ENCODE measurements at regions of chr6 and their contacts with region 1.

Region 1: DNA sequence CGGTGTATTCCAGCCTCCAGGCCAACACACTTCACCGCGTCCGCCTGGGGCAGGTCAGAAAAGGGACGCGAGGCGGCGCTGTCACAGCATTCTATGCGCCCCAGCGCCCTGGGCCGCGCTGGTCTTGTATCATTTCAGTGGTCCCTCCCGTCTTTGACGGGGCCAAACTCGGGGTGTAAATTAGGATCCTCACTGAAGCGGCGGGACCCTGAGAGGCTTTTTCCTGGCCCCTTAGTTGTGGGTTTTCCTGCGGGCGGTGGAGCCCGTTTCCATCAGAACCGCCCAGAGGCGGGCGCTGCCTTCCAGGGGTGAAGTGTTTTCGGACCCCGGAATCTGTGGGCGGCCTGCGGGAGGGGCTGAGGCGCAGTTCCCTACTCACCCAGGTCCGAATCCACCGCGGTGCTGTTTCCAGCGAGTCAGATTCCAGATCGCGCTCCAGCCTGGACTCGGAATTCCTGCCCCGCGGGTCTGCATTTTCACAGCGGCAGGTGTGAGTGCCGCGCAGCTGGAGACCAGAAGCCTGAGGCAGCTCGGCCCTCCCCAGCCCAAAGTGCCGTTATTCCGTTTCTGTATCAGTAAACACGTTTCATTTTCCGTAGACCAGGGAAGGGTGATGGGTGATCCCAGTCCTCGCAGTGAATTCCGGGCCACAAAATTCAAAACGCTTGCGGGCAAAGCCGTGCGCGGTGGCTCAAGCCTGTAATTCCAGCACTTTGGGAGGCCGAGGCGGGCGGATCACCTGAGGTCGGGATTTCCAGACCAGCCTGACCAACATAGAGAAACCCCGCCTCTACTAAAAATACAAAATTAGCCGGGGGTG is 3.9 kb upstream of the MICB start:
- DNase-seq: peak; percentile 70
- ATAC-seq: peak; percentile 73
- H3K4me3 ChIP-seq: peak overlapping the region; percentile 59
- H3K27ac ChIP-seq: peak overlapping the region; percentile 81; the same call in 1 of the 2 replicates
- H3K4me1 ChIP-seq: peaks cover 3% of the 10 kb centered on the region
- H3K27me3 ChIP-seq: no peaks in the 10 kb centered on the region
- CTCF ChIP-seq: peak; percentile 92
- POLR2A ChIP-seq: no peak
- RAD21 ChIP-seq: peak; percentile 84

Region 2: GRCh38 chr6:31453259-31453658 is 40.8 kb before region 1 on chr6:
- CTCF ChIA-PET with region 1: no interaction called
- POLR2A ChIA-PET with region 1: no interaction called
- dilution Hi-C with region 1: no loop called
- in situ Hi-C with region 1: no loop called
- intact Hi-C with region 1: no loop called
- DNase-seq: no peak
- ATAC-seq: no peak
- H3K4me3 ChIP-seq: no peak overlapping the region
- H3K27ac ChIP-seq: no peak overlapping the region
- H3K4me1 ChIP-seq: no peaks in the 10 kb centered on the region
- H3K27me3 ChIP-seq: peaks cover 14% of the 10 kb centered on the region
- CTCF ChIP-seq: no peak
- POLR2A ChIP-seq: no peak
- RAD21 ChIP-seq: no peak

Region 3: DNA sequence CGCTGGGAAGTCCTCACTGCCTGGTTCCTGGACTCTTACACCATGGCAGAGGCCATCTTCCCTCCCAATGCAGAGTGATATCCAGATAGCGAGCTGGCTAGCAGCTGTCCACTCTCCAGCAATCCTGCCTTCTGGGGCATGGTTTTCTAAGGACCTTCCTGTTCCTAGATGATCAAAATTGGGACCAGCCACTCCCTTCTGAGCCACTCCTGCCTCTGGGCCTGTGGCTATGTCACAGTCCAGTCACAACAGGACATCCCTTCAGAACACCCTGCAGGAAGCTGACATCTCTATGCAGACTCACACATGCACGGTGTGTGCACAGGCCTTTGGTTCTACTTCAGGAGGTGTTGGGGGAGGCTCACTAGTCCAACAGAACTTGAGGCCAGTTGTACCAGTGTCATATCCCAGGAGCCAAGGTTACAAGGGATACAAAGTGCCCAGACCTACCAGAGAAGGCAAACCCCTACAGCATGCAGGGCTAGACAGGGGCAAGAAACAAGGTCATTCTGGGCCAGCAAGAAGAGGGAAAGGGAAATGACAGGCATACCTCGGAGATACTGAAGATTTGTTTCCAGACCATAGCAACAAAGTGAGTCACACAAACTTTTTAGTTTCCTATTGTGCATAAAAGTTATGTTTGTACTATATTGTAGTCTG is 32.0 kb after region 1 on chr6:
- CTCF ChIA-PET with region 1: interaction called, 7 read pairs
- POLR2A ChIA-PET with region 1: no interaction called
- dilution Hi-C with region 1: no loop called
- in situ Hi-C with region 1: no loop called
- intact Hi-C with region 1: loop called (anchors 5 kb)
- DNase-seq: peak; percentile 57
- ATAC-seq: peak; percentile 63
- H3K4me3 ChIP-seq: no peak overlapping the region
- H3K27ac ChIP-seq: peak overlapping the region; percentile 8
- H3K4me1 ChIP-seq: peaks cover 10% of the 10 kb centered on the region
- H3K27me3 ChIP-seq: no peaks in the 10 kb centered on the region
- CTCF ChIP-seq: no peak
- POLR2A ChIP-seq: no peak
- RAD21 ChIP-seq: no peak

Region 4: GRCh38 chr6:31541658-31542521 is 47.8 kb after region 1 on chr6 and contains the start of gene DDX39B:
- CTCF ChIA-PET with region 1: interaction called, 4 read pairs
- POLR2A ChIA-PET with region 1: interaction called, 8 read pairs
- dilution Hi-C with region 1: no loop called
- in situ Hi-C with region 1: loop called (anchors 5 kb)
- intact Hi-C with region 1: loop called (anchors 1 kb)
- DNase-seq: peak; percentile 98
- ATAC-seq: peak; percentile 83
- H3K4me3 ChIP-seq: peak within 1 kb of the TSS; percentile 72
- H3K27ac ChIP-seq: peak within 1 kb of the TSS; percentile 83
- H3K4me1 ChIP-seq: peaks cover 10% of the 10 kb centered on the region
- H3K27me3 ChIP-seq: no peaks in the 10 kb centered on the region
- CTCF ChIP-seq: no peak
- POLR2A ChIP-seq: peak; percentile 98
- RAD21 ChIP-seq: 0 out of 2 replicates have a peak, but pooled peaks have one; percentile 13
- total RNA-seq, gene DDX39B: 640 and 796 TPM in 2 replicates

Region 5: GRCh38 chr6:31597006-31597405 is 102.9 kb after region 1 on chr6:
- CTCF ChIA-PET with region 1: interaction called, 20 read pairs
- POLR2A ChIA-PET with region 1: no interaction called
- dilution Hi-C with region 1: no loop called
- in situ Hi-C with region 1: loop called (anchors 5 kb)
- intact Hi-C with region 1: loop called (anchors 1 kb)
- DNase-seq: peak; percentile 31
- ATAC-seq: peak; percentile 56; the same call in 1 of the 2 replicates
- H3K4me3 ChIP-seq: no peak overlapping the region
- H3K27ac ChIP-seq: no peak overlapping the region
- H3K4me1 ChIP-seq: no peaks in the 10 kb centered on the region
- H3K27me3 ChIP-seq: no peaks in the 10 kb centered on the region; the same call in 1 of the 2 replicates
- CTCF ChIP-seq: peak; percentile 37
- POLR2A ChIP-seq: no peak
- RAD21 ChIP-seq: peak; percentile 42

Region 6: DNA sequence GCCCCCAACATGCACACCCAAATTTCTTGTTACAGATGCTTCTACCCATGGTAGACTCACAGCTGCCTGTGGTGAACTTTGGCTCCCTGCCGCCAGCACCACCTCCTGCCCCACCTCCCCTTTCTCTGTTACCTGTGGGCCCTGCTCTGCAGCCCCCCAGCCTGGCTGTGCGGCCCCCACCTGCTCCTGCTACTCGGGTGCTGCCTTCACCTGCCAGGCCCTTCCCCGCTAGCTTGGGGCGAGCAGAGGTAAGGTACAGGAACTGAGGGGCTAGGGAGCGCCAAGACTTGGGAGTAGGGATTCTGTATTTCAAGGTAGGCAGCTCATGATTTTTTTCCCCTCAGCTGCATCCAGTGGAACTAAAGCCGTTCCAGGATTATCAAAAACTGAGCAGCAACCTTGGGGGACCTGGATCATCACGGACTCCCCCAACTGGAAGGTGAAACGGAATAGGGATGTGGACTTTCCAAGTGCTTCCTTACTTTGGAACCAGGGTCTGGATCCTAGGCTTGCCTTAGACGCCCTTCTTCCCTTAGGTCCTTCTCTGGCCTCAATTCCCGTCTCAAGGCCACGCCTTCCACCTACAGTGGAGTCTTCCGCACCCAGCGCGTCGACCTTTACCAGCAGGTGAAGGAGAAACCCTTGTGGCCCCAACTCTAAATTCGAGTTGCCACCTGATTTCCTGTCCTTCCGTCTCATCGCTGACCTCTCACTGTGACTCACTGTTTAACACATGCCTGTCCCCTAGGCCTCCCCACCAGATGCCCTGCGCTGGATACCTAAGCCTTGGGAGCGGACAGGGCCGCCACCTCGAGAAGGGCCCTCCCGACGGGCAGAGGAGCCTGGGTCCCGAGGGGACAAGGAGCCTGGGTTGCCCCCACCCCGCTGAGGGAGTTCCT is 142.9 kb after region 1 on chr6:
- CTCF ChIA-PET with region 1: no interaction called
- POLR2A ChIA-PET with region 1: no interaction called
- dilution Hi-C with region 1: no loop called
- in situ Hi-C with region 1: no loop called
- intact Hi-C with region 1: no loop called
- DNase-seq: no peak
- ATAC-seq: no peak
- H3K4me3 ChIP-seq: no peak overlapping the region
- H3K27ac ChIP-seq: no peak overlapping the region
- H3K4me1 ChIP-seq: no peaks in the 10 kb centered on the region; the same call in 1 of the 2 replicates
- H3K27me3 ChIP-seq: no peaks in the 10 kb centered on the region
- CTCF ChIP-seq: no peak
- POLR2A ChIP-seq: no peak
- RAD21 ChIP-seq: no peak

Measured in IMR-90 (cell line).